Ovary (tissue), 10 donors: ENCODE measurements at regions of chrX and their contacts with region 1.

Region 1: GRCh38 chrX:150790021-150790420 is 96.8 kb downstream of the MTMR1 start:
- DNase-seq: no peak
- H3K4me3 ChIP-seq: no peak overlapping the region
- H3K27ac ChIP-seq: no peak overlapping the region
- H3K4me1 ChIP-seq: no peaks in the 10 kb centered on the region
- H3K27me3 ChIP-seq: no peaks in the 10 kb centered on the region
- CTCF ChIP-seq: no peak
- EP300 ChIP-seq: no peak
- POLR2A ChIP-seq: no peak

Region 2: DNA sequence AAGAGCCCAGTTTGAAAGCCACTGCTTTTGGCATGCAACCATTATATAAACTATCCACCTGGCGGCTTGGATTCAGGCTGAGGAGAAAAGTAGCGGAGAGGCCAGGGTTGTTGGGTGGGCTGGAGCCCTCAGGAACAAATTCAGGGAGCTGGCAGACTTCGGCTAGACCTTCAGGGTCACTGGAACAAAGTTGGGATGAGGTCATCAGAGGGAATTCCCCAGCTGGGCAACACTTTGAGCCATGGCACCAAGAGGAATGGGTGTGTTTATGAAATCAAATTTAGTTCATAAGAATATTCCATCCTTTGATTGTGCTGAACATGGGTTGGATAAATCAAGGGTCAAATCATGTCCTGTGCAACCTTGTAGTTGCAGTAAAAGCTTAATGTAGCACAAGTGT is 74.8 kb before region 1 on chrX:
- intact Hi-C with region 1: no loop called
- DNase-seq: no peak
- H3K4me3 ChIP-seq: no peak overlapping the region
- H3K27ac ChIP-seq: no peak overlapping the region
- H3K4me1 ChIP-seq: no peaks in the 10 kb centered on the region
- H3K27me3 ChIP-seq: no peaks in the 10 kb centered on the region
- CTCF ChIP-seq: no peak
- EP300 ChIP-seq: no peak
- POLR2A ChIP-seq: no peak

Region 3: GRCh38 chrX:151396825-151397740 is 607.1 kb after region 1 on chrX and contains the start of gene VMA21:
- intact Hi-C with region 1: loop called in 1 of 4 experiments (anchors 10 kb)
- DNase-seq: peak; percentile 89 to 95 (median 91)
- H3K4me3 ChIP-seq: peak within 1 kb of the TSS; percentile 74
- H3K27ac ChIP-seq: peak within 1 kb of the TSS; percentile 63 to 95
- H3K4me1 ChIP-seq: peaks cover 6% of the 10 kb centered on the region
- H3K27me3 ChIP-seq: no peaks in the 10 kb centered on the region
- CTCF ChIP-seq: no peak
- EP300 ChIP-seq: no peak
- POLR2A ChIP-seq: peak; percentile 53
- total RNA-seq, gene VMA21: 24.2 to 37.7 (median 28.9) TPM